A549 (cell line): ENCODE measurements at regions of chr5 and their contacts with region 1.

Region 1: GRCh38 chr5:151447174-151448037 is at the start of gene SLC36A1:
- DNase-seq: peak; percentile 89 to 90
- ATAC-seq: peak; percentile 85 to 95
- H3K4me3 ChIP-seq: peak within 1 kb of the TSS; percentile 75
- H3K27ac ChIP-seq: peak within 1 kb of the TSS; percentile 72 to 89
- H3K4me1 ChIP-seq: peaks cover 16% of the 10 kb centered on the region
- CTCF ChIP-seq: peak; percentile 92
- EP300 ChIP-seq: no peak
- POLR2A ChIP-seq: peak; percentile 49; the same call in 1 of the 2 replicates
- RAD21 ChIP-seq: peak; percentile 74 to 86
- polyA plus RNA-seq, gene SLC36A1: 10.8 and 12.4 TPM in 2 replicates

Region 2: DNA sequence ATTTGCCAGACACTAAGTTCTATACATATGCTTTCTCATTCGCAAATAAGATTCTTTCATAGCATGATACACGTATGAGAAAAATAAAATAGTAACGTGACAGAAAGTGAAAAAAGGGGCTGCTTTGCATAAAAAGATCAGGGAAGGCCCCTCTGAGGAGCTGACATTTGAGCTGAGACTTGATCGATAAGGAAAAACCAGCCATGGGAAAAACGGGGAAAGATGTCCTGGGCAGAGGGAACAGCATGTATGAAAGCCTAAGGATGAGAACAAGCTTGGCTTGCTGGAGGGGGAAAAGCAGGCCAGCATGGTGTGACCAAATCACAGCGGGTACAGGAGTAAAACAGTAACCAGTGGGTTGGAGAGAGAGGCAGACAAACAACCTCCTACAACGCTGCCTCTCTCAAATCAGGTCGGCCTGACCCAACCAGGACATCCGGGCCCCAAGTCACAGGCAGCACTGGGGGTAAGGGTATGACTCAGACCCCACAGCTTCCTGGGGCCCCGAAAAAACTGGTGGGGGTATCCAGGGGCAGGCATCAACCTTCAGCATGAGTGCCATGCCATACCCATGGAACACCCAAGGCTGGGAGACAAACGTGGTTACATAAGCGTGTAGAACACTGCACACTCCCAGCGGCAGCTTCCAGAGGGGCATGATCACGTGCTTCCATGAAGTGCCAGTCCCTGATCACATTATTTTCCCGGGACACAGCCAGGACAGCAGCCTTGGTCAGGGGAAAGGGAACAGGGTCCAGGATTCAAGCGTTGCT is 368.7 kb before region 1 on chr5:
- CTCF ChIA-PET with region 1: no interaction called
- POLR2A ChIA-PET with region 1: no interaction called
- DNase-seq: no peak
- ATAC-seq: no peak
- H3K4me3 ChIP-seq: no peak overlapping the region
- H3K27ac ChIP-seq: peak overlapping the region; percentile 34 to 98; a peak in 4 of 6 replicates
- H3K4me1 ChIP-seq: peaks cover 59% of the 10 kb centered on the region
- CTCF ChIP-seq: no peak
- EP300 ChIP-seq: no peak
- POLR2A ChIP-seq: no peak
- RAD21 ChIP-seq: no peak

Region 3: GRCh38 chr5:151208481-151208914 is 238.9 kb before region 1 on chr5:
- CTCF ChIA-PET with region 1: no interaction called
- POLR2A ChIA-PET with region 1: no interaction called
- DNase-seq: no peak
- ATAC-seq: no peak
- H3K4me3 ChIP-seq: no peak overlapping the region
- H3K27ac ChIP-seq: no peak overlapping the region
- H3K4me1 ChIP-seq: no peaks in the 10 kb centered on the region
- CTCF ChIP-seq: no peak
- EP300 ChIP-seq: no peak
- POLR2A ChIP-seq: no peak
- RAD21 ChIP-seq: no peak

Region 4: GRCh38 chr5:151351671-151352070 is 95.7 kb before region 1 on chr5:
- CTCF ChIA-PET with region 1: no interaction called
- POLR2A ChIA-PET with region 1: no interaction called
- DNase-seq: no peak
- ATAC-seq: no peak
- H3K4me3 ChIP-seq: no peak overlapping the region
- H3K27ac ChIP-seq: no peak overlapping the region
- H3K4me1 ChIP-seq: no peaks in the 10 kb centered on the region
- CTCF ChIP-seq: no peak
- EP300 ChIP-seq: no peak
- POLR2A ChIP-seq: no peak
- RAD21 ChIP-seq: no peak

Region 5: GRCh38 chr5:151432210-151432609 is 15.2 kb before region 1 on chr5:
- CTCF ChIA-PET with region 1: interaction called, 13 read pairs
- POLR2A ChIA-PET with region 1: interaction called, 3 read pairs
- DNase-seq: no peak
- ATAC-seq: no peak
- H3K4me3 ChIP-seq: no peak overlapping the region
- H3K27ac ChIP-seq: no peak overlapping the region
- H3K4me1 ChIP-seq: no peaks in the 10 kb centered on the region
- CTCF ChIP-seq: no peak
- EP300 ChIP-seq: no peak
- POLR2A ChIP-seq: no peak
- RAD21 ChIP-seq: no peak

Region 6: GRCh38 chr5:151461312-151461711 is 13.9 kb after region 1 on chr5:
- CTCF ChIA-PET with region 1: interaction called, 22 read pairs
- POLR2A ChIA-PET with region 1: no interaction called
- DNase-seq: no peak
- ATAC-seq: no peak
- H3K4me3 ChIP-seq: no peak overlapping the region
- H3K27ac ChIP-seq: no peak overlapping the region
- H3K4me1 ChIP-seq: no peaks in the 10 kb centered on the region
- CTCF ChIP-seq: no peak
- EP300 ChIP-seq: no peak
- POLR2A ChIP-seq: no peak
- RAD21 ChIP-seq: no peak

Region 7: GRCh38 chr5:151499501-151500035 is 52.2 kb after region 1 on chr5:
- CTCF ChIA-PET with region 1: interaction called, 26 read pairs
- POLR2A ChIA-PET with region 1: no interaction called
- DNase-seq: no peak
- ATAC-seq: no peak
- H3K4me3 ChIP-seq: no peak overlapping the region
- H3K27ac ChIP-seq: no peak overlapping the region
- H3K4me1 ChIP-seq: no peaks in the 10 kb centered on the region
- CTCF ChIP-seq: no peak
- EP300 ChIP-seq: no peak
- POLR2A ChIP-seq: no peak
- RAD21 ChIP-seq: no peak

Region 8: GRCh38 chr5:151509231-151509630 is 61.8 kb after region 1 on chr5:
- CTCF ChIA-PET with region 1: interaction called, 13 read pairs
- POLR2A ChIA-PET with region 1: no interaction called
- DNase-seq: no peak
- ATAC-seq: no peak
- H3K4me3 ChIP-seq: no peak overlapping the region
- H3K27ac ChIP-seq: no peak overlapping the region
- H3K4me1 ChIP-seq: no peaks in the 10 kb centered on the region
- CTCF ChIP-seq: no peak
- EP300 ChIP-seq: no peak
- POLR2A ChIP-seq: no peak
- RAD21 ChIP-seq: no peak